Endothelial cell of umbilical vein (primary cell): ENCODE measurements at regions of chr3 and their contacts with region 1.

Region 1: GRCh38 chr3:58008140-58009025 is at the start of gene FLNB:
- DNase-seq: peak; percentile 77
- H3K4me3 ChIP-seq: peak within 1 kb of the TSS; percentile 71 to 93 (median 78)
- H3K27ac ChIP-seq: peak within 1 kb of the TSS; percentile 38
- H3K4me1 ChIP-seq: peaks cover 31% of the 10 kb centered on the region
- H3K27me3 ChIP-seq: no peaks in the 10 kb centered on the region
- CTCF ChIP-seq: peak; percentile 54 to 81
- POLR2A ChIP-seq: peak; percentile 98
- total RNA-seq, gene FLNB: 595 and 670 TPM in 2 replicates

Region 2: DNA sequence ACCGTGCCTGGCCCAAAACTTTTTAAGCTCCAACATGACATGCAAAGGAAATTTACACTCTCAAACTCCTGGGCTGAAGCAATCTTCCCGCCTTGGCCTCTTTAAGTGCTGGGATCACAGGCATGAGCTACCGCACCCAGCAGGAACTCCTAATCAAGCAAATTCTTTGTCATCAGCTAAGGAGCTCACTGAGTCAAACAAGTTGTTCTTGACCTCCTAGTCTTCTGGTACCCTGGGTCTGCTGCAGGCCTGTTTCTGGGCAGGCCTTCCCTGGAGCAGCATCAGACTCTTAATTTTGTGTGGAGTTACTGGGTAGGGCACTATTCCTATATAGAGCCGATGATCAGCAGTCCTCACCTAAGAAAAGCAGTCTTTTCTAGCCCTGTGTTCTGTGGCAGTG is 68.6 kb before region 1 on chr3:
- CTCF ChIA-PET with region 1: no interaction called
- POLR2A ChIA-PET with region 1: no interaction called
- dilution Hi-C with region 1: no loop called
- intact Hi-C with region 1: no loop called
- DNase-seq: no peak
- H3K4me3 ChIP-seq: no peak overlapping the region
- H3K27ac ChIP-seq: no peak overlapping the region
- H3K4me1 ChIP-seq: peaks cover 7% of the 10 kb centered on the region
- H3K27me3 ChIP-seq: no peaks in the 10 kb centered on the region
- CTCF ChIP-seq: no peak
- POLR2A ChIP-seq: no peak

Region 3: GRCh38 chr3:57951066-57951882 is 57.1 kb before region 1 on chr3:
- CTCF ChIA-PET with region 1: interaction called, 7 read pairs
- POLR2A ChIA-PET with region 1: interaction called, 4 read pairs
- dilution Hi-C with region 1: no loop called
- intact Hi-C with region 1: loop called (anchors 1 kb)
- DNase-seq: peak; percentile 95
- H3K4me3 ChIP-seq: peak overlapping the region in 1 of 3 experiments; percentile 6
- H3K27ac ChIP-seq: peak overlapping the region; percentile 98
- H3K4me1 ChIP-seq: peaks cover 43% of the 10 kb centered on the region
- H3K27me3 ChIP-seq: no peaks in the 10 kb centered on the region
- CTCF ChIP-seq: no peak
- POLR2A ChIP-seq: no peak

Region 4: GRCh38 chr3:57974796-57975388 is 33.5 kb before region 1 on chr3:
- CTCF ChIA-PET with region 1: interaction called, 26 read pairs
- POLR2A ChIA-PET with region 1: interaction called, 3 read pairs
- dilution Hi-C with region 1: no loop called
- intact Hi-C with region 1: no loop called
- DNase-seq: peak; percentile 86
- H3K4me3 ChIP-seq: no peak overlapping the region
- H3K27ac ChIP-seq: peak overlapping the region; percentile 94
- H3K4me1 ChIP-seq: peaks cover 47% of the 10 kb centered on the region
- H3K27me3 ChIP-seq: no peaks in the 10 kb centered on the region
- CTCF ChIP-seq: no peak
- POLR2A ChIP-seq: no peak

Region 5: DNA sequence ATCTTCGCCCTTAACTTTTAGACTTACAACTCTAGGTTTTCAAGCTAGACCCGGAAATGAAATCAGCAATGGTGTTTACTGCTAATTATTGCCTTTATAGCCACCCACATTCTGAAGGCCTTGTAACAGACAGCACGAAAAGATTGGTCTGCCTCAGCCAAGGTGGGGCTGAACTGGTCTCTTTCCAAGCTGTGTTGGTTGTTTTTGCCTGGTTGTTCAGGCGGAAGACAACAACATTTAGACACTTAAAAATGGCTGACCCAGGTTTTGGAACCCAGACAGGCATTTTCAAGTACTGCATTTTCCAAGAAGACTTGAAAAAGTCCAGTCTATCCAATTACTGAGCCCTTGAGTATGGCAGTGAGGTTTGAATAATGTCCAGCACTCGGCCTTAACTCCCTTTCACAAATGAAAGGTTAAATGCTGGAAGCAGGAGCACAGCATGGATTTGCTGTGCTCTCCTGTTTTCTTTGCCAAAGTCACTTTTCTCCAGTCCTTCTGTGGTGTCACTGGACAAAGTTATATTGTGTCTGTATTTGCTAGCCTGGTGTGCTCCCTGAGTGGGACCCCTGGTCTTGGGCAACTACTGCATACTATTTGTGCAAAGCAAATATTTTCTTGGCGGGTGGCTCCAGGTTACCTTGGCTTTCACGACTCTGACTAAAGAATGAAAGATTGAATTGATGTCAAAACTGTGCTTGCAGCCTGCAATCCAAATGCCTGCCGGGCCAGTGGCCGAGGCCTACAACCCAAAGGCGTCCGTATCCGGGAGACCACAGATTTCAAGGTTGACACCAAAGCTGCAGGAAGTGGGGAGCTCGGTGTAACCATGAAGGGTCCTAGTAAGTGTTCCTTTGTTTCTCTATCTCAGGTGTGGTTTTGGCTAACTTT is 93.4 kb after region 1 on chr3:
- CTCF ChIA-PET with region 1: interaction called, 10 read pairs
- POLR2A ChIA-PET with region 1: no interaction called
- dilution Hi-C with region 1: no loop called
- intact Hi-C with region 1: no loop called
- DNase-seq: no peak
- H3K4me3 ChIP-seq: no peak overlapping the region
- H3K27ac ChIP-seq: no peak overlapping the region
- H3K4me1 ChIP-seq: peaks cover 4% of the 10 kb centered on the region
- H3K27me3 ChIP-seq: no peaks in the 10 kb centered on the region
- CTCF ChIP-seq: no peak
- POLR2A ChIP-seq: no peak

Region 6: GRCh38 chr3:58299839-58300516 is 291.6 kb after region 1 on chr3:
- CTCF ChIA-PET with region 1: no interaction called
- POLR2A ChIA-PET with region 1: no interaction called
- dilution Hi-C with region 1: no loop called
- intact Hi-C with region 1: loop called (anchors 2 kb)
- DNase-seq: peak; percentile 70
- H3K4me3 ChIP-seq: no peak overlapping the region
- H3K27ac ChIP-seq: no peak overlapping the region
- H3K4me1 ChIP-seq: no peaks in the 10 kb centered on the region
- H3K27me3 ChIP-seq: peaks cover 17 to 18% of the 10 kb centered on the region in 2 experiments
- CTCF ChIP-seq: peak; percentile 33 to 37
- POLR2A ChIP-seq: no peak